Esophagus squamous epithelium (tissue), 5 donors: ENCODE measurements at regions of chr19 and their contacts with region 1.

Region 1: DNA sequence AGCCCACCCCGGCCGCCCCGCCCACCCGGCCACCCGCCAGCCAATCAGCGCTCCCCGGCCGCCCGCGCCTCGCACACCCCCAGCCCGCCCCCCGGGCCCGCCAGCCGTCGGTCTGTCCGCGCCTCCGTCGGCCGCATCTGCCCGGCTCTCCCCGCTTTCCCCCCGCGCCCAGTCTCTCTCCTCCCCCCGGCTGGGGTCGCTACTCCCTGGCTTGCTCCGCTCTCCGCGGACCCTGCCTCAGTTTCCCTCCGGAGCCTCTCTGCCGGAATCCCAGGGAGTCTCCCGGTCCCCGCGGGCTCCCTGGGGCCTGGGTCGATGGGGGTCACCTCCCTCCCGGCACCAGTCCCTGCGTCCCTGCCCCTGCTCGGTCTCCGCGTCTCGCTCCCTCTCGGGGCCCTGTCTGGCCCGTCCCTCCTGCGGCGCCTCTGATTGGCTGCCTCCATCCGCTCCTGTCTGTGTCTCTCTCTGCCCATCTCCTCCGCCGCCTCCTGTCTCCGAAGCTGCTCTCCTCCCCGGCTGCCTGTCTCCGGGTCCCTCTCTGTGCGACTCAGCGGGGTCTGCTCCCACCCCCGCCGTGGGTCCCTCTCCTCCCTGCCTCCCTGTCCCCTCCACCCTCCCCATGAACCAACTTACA is 475 bp downstream of the IL11 start:
- DNase-seq: no peak
- H3K4me3 ChIP-seq: peak overlapping the region in 3 of 4 donors; percentile 12 to 58 (median 39)
- H3K27ac ChIP-seq: no peak overlapping the region
- H3K4me1 ChIP-seq: peaks cover 17 to 38% (median 20%) of the 10 kb centered on the region in 3 donors
- H3K27me3 ChIP-seq: peaks cover 17 to 98% (median 40%) of the 10 kb centered on the region in 4 donors
- CTCF ChIP-seq: no peak
- POLR2A ChIP-seq: no peak

Region 2: DNA sequence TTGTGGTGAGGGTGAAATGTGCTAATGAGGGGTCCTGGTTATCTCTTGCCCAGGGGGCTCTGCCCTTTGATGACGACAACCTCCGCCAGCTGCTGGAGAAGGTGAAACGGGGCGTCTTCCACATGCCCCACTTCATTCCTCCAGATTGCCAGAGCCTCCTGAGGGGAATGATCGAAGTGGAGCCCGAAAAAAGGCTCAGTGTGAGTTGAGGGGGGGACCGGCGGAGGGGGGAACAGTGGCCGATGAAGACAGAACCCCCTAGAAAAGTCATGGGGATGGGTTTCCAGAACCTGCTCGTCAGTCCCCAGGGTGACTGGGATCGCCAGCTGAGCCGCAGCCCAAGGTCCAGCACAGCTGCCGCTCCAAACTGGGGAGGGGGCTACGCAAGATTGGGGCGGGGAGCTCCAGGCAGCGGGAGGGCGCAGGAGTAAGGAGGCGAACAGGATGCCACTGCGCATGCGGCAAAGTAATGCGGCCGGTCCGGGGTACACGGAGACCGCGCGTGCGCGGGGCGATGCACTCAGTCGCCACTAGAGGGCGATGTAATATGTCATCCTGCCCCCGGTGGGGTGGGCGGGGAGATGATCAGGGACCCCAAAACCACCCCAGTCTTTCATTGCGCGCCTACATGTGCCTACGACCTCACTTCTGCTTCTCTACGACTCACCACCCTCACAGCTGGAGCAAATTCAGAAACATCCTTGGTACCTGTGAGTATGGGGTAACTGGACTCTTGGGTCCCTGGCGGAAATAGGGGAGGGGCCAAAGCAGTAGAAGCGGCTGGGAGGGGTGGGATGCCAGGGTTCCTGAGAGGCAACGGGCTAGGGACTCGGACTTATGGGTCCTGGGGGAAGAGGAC is 68.1 kb before region 1 on chr19:
- intact Hi-C with region 1: loop called (anchors 10 kb)
- DNase-seq: no peak
- H3K4me3 ChIP-seq: peak overlapping the region in 3 of 4 donors; percentile 32 to 62 (median 35)
- H3K27ac ChIP-seq: peak overlapping the region in 2 of 4 donors; percentile 4 to 27
- H3K4me1 ChIP-seq: peaks cover 9 to 11% (median 10%) of the 10 kb centered on the region in 3 donors
- H3K27me3 ChIP-seq: no peaks in the 10 kb centered on the region
- CTCF ChIP-seq: peak; percentile 95 to 100 (median 98)
- POLR2A ChIP-seq: no peak

Region 3: GRCh38 chr19:55418185-55418584 is 48.4 kb after region 1 on chr19:
- intact Hi-C with region 1: no loop called
- DNase-seq: no peak
- H3K4me3 ChIP-seq: no peak overlapping the region
- H3K27ac ChIP-seq: no peak overlapping the region
- H3K4me1 ChIP-seq: peaks cover 0 to 4% (median 0%) of the 10 kb centered on the region in 3 donors
- H3K27me3 ChIP-seq: peaks cover 0 to 53% (median 0%) of the 10 kb centered on the region in 4 donors
- CTCF ChIP-seq: peak; percentile 46 to 80 (median 68)
- POLR2A ChIP-seq: no peak